ENCODE measurements at regions of chr14 and their contacts with region 1.

Region 1: GRCh38 chr14:89416002-89416995 is 734 bp downstream of the FOXN3 start:
- DNase-seq: peak; percentile 100
- H3K4me3 ChIP-seq: peak overlapping the region; percentile 73
- H3K27ac ChIP-seq: peak overlapping the region; percentile 96
- H3K4me1 ChIP-seq: no peaks in the 10 kb centered on the region
- H3K27me3 ChIP-seq: no peaks in the 10 kb centered on the region
- CTCF ChIP-seq: no peak

Region 2: DNA sequence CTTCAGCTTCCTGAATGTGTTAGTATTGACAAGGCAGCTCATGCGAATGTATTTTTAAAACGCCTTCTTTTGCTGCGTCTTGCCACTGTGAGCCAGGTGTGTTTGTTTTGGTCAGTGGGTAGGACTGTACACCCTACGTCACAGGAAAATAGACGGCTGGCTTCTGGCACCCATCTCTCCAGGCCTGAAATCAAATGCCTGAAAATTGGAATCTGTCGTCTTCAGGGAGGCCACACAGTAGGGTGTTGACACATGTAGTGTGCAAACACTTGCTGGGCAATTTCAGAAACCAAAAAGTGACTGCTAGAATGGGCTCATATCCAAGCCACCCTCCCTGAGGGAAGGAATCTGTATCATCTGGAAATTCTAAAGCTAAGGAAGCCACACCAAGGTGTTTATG is 382.5 kb before region 1 on chr14:
- intact Hi-C with region 1: loop called (anchors 10 kb)
- DNase-seq: no peak
- H3K4me3 ChIP-seq: no peak overlapping the region
- H3K27ac ChIP-seq: no peak overlapping the region
- H3K4me1 ChIP-seq: no peaks in the 10 kb centered on the region
- H3K27me3 ChIP-seq: no peaks in the 10 kb centered on the region
- CTCF ChIP-seq: no peak

Region 3: GRCh38 chr14:89185919-89186855 is 230.1 kb before region 1 on chr14:
- intact Hi-C with region 1: loop called (anchors 10 kb)
- DNase-seq: no peak
- H3K4me3 ChIP-seq: no peak overlapping the region
- H3K27ac ChIP-seq: no peak overlapping the region
- H3K4me1 ChIP-seq: no peaks in the 10 kb centered on the region
- H3K27me3 ChIP-seq: no peaks in the 10 kb centered on the region
- CTCF ChIP-seq: no peak